ENCODE measurements at regions of chr1 and their contacts with region 1.

Region 1: DNA sequence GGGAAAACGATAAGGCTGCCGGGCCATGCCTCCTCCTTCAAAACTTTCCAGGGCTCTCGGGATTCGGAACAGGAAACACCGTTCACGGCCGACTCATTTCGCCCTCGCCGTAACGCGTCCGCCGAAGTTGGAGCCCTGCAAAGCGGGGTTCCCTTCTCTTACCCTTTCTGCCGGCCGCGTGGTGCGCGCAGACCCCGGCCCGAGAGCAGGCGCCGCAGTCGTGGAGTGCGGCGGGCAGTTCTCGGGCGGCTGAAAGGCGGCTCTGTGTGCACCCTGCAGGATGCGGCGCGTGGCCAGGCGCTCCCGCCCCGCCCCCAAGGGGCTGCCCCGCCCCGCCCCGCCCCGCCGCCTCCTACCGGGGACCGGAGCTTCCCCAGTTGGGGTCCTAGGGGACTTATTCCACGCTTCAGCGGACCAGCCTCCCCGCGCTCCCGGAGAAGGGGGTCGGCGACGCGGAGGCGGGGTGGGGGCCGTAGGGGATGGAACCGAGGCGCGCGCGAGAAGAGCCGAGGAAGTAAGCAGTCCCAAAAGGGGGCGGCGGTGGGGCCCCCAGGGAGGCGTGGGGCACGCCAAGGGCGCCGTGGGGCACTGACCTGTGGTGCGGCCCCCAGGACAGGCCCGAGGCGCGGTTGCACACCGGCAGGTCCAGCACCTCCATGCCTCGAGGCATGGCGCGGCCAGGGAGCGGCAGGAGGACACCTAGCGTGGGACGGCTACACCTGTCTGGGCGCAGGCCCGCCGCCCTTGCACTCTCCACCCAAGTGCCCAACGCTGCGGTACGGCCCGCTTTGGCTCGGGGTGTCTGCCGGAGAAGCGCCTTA is at the start of gene MCOLN2:
- DNase-seq: peak; percentile 88
- H3K4me3 Mint-ChIP-seq: peak within 1 kb of the TSS; percentile 85
- H3K27ac Mint-ChIP-seq: peak within 1 kb of the TSS; percentile 89
- H3K4me1 Mint-ChIP-seq: peaks cover 47% of the 10 kb centered on the region
- H3K27me3 Mint-ChIP-seq: peaks cover 36% of the 10 kb centered on the region
- total RNA-seq, gene MCOLN2: 92.3 and 95.6 TPM in 2 replicates

Region 2: GRCh38 chr1:84959294-84959693 is 37.8 kb before region 1 on chr1:
- intact Hi-C with region 1: loop called (anchors 1 kb)
- DNase-seq: peak; percentile 85
- H3K4me3 Mint-ChIP-seq: no peak overlapping the region
- H3K27ac Mint-ChIP-seq: peak overlapping the region; percentile 69
- H3K4me1 Mint-ChIP-seq: peaks cover 22% of the 10 kb centered on the region
- H3K27me3 Mint-ChIP-seq: no peaks in the 10 kb centered on the region

Region 3: DNA sequence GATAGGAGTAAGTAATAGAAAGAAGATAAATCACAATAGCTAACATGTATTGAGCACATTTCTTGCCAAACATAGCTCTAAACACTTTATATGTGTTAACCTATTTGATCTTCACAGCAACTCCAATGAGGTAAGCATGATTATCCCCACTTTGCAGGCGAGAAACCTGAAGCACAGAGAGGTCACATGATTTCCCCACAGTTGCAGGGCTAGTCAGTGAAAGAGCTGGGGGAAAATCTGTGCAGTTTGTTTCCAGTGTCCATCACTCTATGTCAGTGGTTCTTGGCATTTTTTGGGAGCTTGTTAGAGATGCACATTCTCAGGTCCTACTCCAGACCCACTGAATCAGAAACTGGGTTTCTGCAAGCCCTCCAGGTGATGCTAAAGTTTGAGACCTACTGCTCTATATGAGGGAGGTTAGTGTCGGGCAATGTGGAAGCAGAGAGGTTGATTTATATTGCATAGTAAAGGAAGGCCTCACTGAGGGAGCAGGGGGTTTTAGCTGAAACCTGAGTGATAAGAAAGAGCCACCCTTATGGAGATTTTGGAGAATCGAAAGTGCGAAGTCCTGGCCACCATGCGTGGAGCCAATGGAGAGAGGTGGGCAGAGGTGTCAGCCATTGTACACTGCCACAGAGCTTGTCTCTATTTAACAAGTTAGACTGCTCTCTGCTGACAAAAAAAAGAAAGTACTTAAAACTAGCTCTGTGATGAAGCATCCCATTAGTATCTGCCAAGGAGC is 30.4 kb after region 1 on chr1:
- intact Hi-C with region 1: loop called (anchors 2 kb)
- DNase-seq: peak; percentile 74
- H3K4me3 Mint-ChIP-seq: no peak overlapping the region
- H3K27ac Mint-ChIP-seq: peak overlapping the region; percentile 72
- H3K4me1 Mint-ChIP-seq: peaks cover 8% of the 10 kb centered on the region
- H3K27me3 Mint-ChIP-seq: peaks cover 5% of the 10 kb centered on the region

Region 4: GRCh38 chr1:85200870-85201339 is 203.8 kb after region 1 on chr1 and contains the start of gene SYDE2:
- intact Hi-C with region 1: loop called (anchors 2 kb)
- DNase-seq: peak; percentile 94
- H3K4me3 Mint-ChIP-seq: peak within 1 kb of the TSS; percentile 94
- H3K27ac Mint-ChIP-seq: peak within 1 kb of the TSS; percentile 87
- H3K4me1 Mint-ChIP-seq: peaks cover 12% of the 10 kb centered on the region
- H3K27me3 Mint-ChIP-seq: peaks cover 39% of the 10 kb centered on the region
- total RNA-seq, gene SYDE2: 1.2 and 1.4 TPM in 2 replicates

Region 5: DNA sequence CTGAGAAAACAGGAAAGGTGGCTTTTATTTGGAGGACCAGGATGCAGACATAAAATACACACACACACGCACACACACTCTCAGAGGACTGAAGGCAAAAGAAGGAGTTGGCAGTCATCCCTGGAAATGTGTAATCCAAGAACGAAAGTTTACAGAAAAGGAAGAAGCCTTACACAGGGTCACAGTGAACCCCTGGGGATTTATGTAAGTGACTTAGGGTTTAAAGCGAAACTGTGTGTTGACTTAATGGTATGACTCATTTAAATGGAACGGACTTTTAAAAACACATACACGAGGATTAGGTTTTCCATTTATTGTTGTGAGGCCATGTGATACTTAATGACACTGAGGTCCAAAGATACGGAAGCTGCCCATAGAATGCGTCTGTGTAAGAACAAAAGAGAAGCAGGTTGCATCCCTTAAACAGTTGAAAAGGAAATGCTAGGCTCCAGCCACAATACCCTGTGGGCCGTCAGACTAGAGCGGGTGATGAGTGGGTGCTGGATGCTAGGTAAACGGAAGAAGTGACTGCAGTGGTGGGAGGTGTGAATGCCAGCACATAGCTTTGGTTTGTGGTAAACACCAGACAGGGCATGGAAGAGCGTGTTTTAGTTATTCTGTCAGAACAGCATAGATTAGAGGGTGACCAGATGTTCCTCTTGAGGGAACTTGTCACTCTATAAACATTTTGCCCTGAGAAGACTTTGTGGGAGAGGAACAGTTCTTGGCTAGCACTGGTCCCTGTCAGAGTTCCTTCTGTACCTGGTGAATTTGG is 301.0 kb after region 1 on chr1:
- intact Hi-C with region 1: loop called (anchors 1 kb)
- DNase-seq: peak; percentile 82
- H3K4me3 Mint-ChIP-seq: peak overlapping the region; percentile 56
- H3K27ac Mint-ChIP-seq: peak overlapping the region; percentile 86
- H3K4me1 Mint-ChIP-seq: peaks cover 25% of the 10 kb centered on the region
- H3K27me3 Mint-ChIP-seq: peaks cover 49% of the 10 kb centered on the region

Measured in activated CD4-positive, alpha-beta T cell treated with anti-CD3 and anti-CD28 coated beads, Interleukin-2, amount 10 ng/mL, durations not matched to agents 24 days and 14 days (primary cell).